Activated CD4-positive, alpha-beta T cell treated with anti-CD3 and anti-CD28 coated beads, Interleukin-2, amount 10 ng/mL, durations not matched to agents 24 days and 14 days (primary cell): ENCODE measurements at regions of chr1 and their contacts with region 1.

Region 1: DNA sequence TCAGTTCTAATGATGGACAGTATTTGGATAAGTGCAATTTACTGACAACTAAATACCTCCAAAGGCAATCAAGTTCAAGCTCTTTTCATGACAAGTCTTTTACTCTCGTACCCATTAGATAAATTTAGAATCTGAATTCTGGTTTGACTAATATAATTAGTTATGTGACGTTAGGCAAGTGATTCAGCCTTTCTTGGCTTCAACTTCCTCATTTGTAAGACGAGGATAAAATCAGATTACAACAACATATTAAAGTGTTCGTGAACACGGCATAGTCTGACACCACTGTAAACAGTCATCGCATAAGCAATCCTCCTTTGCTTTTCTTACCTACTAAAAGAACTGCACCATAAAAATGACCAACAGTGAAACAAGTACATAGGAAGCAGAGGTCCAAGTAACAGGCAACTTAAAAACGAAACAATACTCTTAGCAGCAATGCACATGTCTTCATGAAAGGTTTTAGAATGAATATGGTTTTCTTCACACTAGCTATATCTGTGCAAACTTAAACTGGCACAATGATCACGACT is 25.7 kb downstream of the COA6 start:
- DNase-seq: peak; percentile 64
- H3K4me3 Mint-ChIP-seq: peak overlapping the region; percentile 76
- H3K27ac Mint-ChIP-seq: peak overlapping the region; percentile 84
- H3K4me1 Mint-ChIP-seq: peaks cover 43% of the 10 kb centered on the region
- H3K27me3 Mint-ChIP-seq: no peaks in the 10 kb centered on the region

Region 2: DNA sequence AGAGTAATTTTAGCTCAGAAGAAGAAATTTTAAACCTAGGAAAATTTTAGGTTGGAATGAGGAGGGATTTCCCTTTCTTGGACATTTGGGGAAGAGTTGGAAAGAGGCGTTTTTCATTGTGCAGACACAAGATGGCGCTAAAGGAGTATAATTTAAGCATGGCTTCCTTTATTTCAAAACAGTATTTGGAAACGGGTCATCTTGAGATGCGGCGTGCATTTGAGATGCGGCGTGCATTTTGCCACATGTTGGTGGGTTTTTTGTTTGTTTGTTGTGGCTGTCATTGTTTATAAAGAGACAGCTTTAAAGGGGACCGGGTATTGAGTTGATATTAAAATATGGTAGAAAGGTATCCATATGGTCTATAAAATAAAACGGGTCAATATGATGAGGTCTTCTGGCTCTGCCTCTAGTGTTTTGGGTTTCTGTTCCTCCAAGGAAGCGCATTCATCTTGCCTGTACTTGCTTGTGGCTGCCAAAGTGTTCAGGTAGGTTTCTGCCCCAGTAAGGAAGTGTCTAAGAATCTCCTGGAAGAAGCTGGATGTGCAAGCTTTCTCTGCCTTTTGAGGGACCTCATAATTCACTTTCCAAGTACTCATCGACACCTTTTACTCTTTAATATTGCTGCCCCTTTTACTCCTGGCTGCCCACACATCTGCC is 284.1 kb before region 1 on chr1:
- intact Hi-C with region 1: loop called (anchors 10 kb)
- DNase-seq: peak; percentile 76
- H3K4me3 Mint-ChIP-seq: peak overlapping the region; percentile 57
- H3K27ac Mint-ChIP-seq: no peak overlapping the region
- H3K4me1 Mint-ChIP-seq: peaks cover 7% of the 10 kb centered on the region
- H3K27me3 Mint-ChIP-seq: peaks cover 32% of the 10 kb centered on the region

Region 3: DNA sequence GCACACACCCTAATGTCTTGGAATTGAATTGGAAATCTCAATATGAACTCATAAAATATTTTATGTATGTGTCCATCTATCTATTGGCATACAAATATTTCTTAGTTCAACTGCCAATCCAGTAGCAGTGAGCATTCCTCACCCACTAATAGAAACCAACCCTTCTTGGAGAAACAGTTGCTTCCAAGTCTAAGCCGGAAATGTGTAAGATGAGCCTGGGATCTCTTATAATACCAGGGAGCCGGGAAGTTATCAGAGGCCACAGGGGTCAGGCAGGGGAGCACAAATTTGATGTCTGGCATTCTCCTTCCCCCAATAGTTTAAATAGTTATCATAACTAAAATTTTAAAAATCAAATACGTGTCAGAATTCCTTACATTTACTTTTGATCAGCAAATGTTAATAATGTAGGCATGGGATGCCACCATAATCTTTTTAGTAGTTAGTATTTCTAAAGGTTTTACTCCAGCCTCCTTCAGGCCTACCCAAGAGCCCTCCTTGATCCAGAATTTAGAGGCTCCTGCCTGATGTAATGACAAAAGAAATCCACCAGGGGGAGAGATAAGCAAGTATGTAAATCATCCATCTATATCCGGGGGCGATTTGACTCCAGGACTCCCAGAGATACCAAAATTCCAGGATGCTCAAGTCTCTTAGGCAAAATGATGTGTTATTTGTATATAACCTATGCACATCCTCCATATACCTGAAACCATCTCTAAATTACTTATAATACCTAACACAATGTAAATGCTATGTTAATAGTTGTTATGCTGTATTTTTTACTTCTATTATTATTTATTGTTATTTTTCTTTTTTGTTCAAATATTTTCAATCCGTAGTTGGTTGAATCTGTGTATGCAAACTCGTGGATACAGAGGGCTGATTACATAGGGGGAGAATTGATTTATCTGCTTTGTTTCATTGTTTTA is 244.3 kb before region 1 on chr1:
- intact Hi-C with region 1: loop called (anchors 10 kb)
- DNase-seq: peak; percentile 77
- H3K4me3 Mint-ChIP-seq: no peak overlapping the region
- H3K27ac Mint-ChIP-seq: no peak overlapping the region
- H3K4me1 Mint-ChIP-seq: no peaks in the 10 kb centered on the region
- H3K27me3 Mint-ChIP-seq: peaks cover 21% of the 10 kb centered on the region

Region 4: DNA sequence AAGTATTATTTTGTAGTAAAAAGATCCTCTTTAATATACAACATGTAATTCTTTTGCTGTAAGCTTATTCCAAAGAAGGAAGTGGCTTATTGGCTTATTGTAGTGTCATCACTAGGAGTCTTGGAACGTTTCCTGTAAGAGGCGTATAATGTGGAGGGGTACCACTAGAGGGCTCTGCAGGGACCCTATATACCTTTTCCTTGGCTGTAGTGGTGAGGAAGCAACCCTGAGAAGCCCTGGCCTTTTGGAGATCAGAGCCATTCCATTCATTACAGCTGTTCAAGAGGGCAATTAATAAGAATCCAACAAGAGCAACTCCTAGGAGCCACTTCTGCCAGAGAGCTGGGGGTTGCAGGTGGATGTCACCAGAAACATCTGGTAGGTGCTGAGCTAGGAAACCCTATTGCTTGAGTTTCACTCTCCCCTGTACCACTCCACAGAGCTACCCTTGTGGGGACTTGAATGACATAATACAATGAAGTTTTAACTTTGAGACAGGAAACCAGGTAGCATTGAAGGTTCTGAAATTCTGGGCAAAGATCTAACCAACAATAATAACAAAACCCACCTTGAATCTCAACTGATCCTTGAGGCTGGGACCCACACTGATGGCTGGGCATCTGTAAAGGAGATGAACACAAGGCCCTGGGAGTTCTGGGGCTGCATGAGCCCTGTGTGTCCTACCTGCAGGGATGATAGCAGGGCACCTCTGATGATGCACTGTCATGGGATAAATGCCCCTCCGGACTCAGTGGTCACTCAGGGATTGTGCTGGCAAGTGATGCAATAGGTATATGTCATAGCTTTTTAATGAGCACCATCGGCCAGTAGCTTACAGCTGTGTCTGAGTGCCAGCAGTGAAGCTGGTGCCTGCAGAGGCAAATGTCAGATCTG is 185.9 kb before region 1 on chr1:
- intact Hi-C with region 1: loop called (anchors 10 kb)
- DNase-seq: peak; percentile 75
- H3K4me3 Mint-ChIP-seq: peak overlapping the region; percentile 86
- H3K27ac Mint-ChIP-seq: no peak overlapping the region
- H3K4me1 Mint-ChIP-seq: peaks cover 34% of the 10 kb centered on the region
- H3K27me3 Mint-ChIP-seq: peaks cover 22% of the 10 kb centered on the region

Region 5: DNA sequence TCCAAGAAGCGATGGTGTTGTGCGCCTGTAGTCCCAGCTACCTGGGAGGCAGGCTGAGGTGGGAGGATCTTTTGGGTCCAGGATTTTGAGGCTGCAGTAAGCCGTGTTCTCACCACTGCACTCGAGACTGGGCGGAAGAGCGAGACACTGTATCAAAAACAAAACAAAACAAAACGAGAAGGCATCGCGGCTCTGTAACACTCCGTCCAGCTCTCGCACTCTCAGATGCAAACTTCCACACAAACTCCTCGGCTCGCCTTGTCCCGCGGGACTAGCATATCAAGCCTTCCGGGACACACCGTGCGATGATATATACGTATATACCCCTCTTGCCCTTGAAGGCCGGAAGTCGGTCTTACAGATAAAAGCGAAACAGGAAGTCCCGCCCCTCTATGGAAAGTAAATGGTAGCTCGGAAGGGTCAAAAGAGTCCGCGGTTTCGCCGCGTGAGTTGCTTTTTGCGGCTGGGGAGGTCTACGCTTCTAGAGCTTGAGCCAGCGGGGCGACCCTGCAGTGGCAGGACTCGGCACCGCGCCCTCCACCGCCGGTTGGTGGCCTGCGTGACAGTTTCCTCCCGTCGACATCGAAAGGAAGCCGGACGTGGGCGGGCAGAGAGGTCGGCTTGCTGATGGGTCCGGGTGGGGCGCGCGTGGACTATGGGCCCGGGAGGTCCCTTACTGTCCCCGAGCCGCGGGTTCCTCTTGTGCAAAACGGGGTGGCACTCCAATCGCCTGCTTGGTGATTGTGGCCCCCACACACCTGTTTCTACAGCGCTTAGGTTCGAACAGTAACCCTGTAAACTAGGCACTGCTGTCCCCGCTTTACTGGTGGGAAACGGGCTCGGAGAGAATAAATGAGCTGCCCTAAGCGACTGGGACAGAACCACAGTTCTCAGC is 25.6 kb before region 1 on chr1 and contains the start of gene COA6:
- intact Hi-C with region 1: loop called (anchors 1 kb)
- DNase-seq: peak; percentile 96
- H3K4me3 Mint-ChIP-seq: peak within 1 kb of the TSS; percentile 95
- H3K27ac Mint-ChIP-seq: peak within 1 kb of the TSS; percentile 100
- H3K4me1 Mint-ChIP-seq: peaks cover 47% of the 10 kb centered on the region
- H3K27me3 Mint-ChIP-seq: peaks cover 2% of the 10 kb centered on the region
- total RNA-seq, gene COA6: 67.7 and 68.3 TPM in 2 replicates

Region 6: GRCh38 chr1:234409328-234409727 is 10.4 kb after region 1 on chr1:
- intact Hi-C with region 1: loop called (anchors 1 kb)
- DNase-seq: peak; percentile 81
- H3K4me3 Mint-ChIP-seq: peak overlapping the region; percentile 67
- H3K27ac Mint-ChIP-seq: peak overlapping the region; percentile 84
- H3K4me1 Mint-ChIP-seq: peaks cover 30% of the 10 kb centered on the region
- H3K27me3 Mint-ChIP-seq: no peaks in the 10 kb centered on the region

Region 7: GRCh38 chr1:234478481-234479309 is 79.8 kb after region 1 on chr1 and contains the start of gene TARBP1:
- intact Hi-C with region 1: loop called (anchors 5 kb)
- DNase-seq: peak; percentile 94
- H3K4me3 Mint-ChIP-seq: peak within 1 kb of the TSS; percentile 87
- H3K27ac Mint-ChIP-seq: peak within 1 kb of the TSS; percentile 85
- H3K4me1 Mint-ChIP-seq: peaks cover 34% of the 10 kb centered on the region
- H3K27me3 Mint-ChIP-seq: peaks cover 12% of the 10 kb centered on the region
- total RNA-seq, gene TARBP1: 70.7 and 75.9 TPM in 2 replicates